CD4-positive, alpha-beta T cell (primary cell): ENCODE measurements at regions of chr21 and their contacts with region 1.

Region 1: DNA sequence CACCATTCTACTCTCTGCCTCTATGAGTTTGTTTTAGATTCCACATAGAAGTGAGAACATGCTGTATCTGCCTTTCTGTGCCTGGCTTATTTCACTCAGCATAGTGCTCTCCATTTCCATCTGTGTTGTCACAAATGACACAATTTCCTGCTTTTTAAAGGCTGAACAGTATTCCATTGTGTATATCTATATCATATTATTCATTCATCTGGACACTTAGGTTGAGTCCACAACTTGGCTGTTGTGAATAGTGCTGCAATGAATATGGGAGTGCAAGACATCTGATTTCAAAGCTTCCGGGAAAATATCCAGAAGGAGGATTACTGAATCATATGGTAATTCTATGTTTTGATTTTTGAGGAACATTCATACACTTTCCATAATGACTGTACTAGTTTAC is 20.1 kb upstream of the DONSON start:
- DNase-seq: no peak
- ATAC-seq: no peak
- H3K4me3 ChIP-seq: no peak overlapping the region
- H3K4me3 Mint-ChIP-seq: no peak overlapping the region
- H3K27ac ChIP-seq: no peak overlapping the region
- H3K27ac Mint-ChIP-seq: no peak overlapping the region
- H3K4me1 ChIP-seq: no peaks in the 10 kb centered on the region
- H3K4me1 Mint-ChIP-seq: peaks cover 5% of the 10 kb centered on the region
- H3K27me3 ChIP-seq: no peaks in the 10 kb centered on the region
- H3K27me3 Mint-ChIP-seq: no peaks in the 10 kb centered on the region
- CTCF ChIP-seq: no peak

Region 2: GRCh38 chr21:33479679-33480480 is 128.7 kb before region 1 on chr21 and contains the start of gene TMEM50B:
- CTCF ChIA-PET with region 1: interaction called, 5 read pairs
- POLR2A ChIA-PET with region 1: interaction called, 15 read pairs
- intact Hi-C with region 1: no loop called
- DNase-seq: peak; percentile 91 to 99 (median 96)
- ATAC-seq: peak; percentile 89
- H3K4me3 ChIP-seq: peak within 1 kb of the TSS; percentile 88
- H3K4me3 Mint-ChIP-seq: peak within 1 kb of the TSS; percentile 89
- H3K27ac ChIP-seq: peak within 1 kb of the TSS; percentile 80 to 90
- H3K27ac Mint-ChIP-seq: peak within 1 kb of the TSS; percentile 96
- H3K4me1 ChIP-seq: peaks cover 22% of the 10 kb centered on the region
- H3K4me1 Mint-ChIP-seq: peaks cover 19% of the 10 kb centered on the region
- H3K27me3 ChIP-seq: no peaks in the 10 kb centered on the region
- H3K27me3 Mint-ChIP-seq: no peaks in the 10 kb centered on the region
- CTCF ChIP-seq: peak; percentile 0
- total RNA-seq, gene TMEM50B: 38.4 to 40.3 TPM

Region 3: DNA sequence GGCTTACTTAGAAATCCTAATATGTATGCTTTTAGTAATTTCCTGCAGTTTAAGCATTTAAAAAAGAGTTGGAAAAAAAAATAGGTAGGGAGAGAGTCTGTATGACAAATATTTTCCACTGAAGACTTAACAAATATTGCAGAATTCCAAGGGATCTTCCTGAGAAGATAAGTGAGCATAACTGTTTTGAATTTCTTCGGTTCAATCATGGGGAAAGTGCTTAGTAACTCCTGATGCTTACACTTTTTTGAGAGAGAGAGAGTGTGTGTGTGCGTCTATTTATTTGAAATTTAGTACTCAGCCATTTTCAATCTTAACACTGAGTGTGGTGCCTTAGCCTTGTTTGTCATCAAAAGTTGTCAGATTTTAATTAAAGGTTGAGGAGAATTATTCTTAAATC is 47.2 kb before region 1 on chr21:
- CTCF ChIA-PET with region 1: interaction called, 4 read pairs
- POLR2A ChIA-PET with region 1: interaction called, 4 read pairs
- intact Hi-C with region 1: loop called in 1 of 2 experiments (anchors 5 kb)
- DNase-seq: no peak
- ATAC-seq: no peak
- H3K4me3 ChIP-seq: no peak overlapping the region
- H3K4me3 Mint-ChIP-seq: no peak overlapping the region
- H3K27ac ChIP-seq: no peak overlapping the region
- H3K27ac Mint-ChIP-seq: peak overlapping the region; percentile 2
- H3K4me1 ChIP-seq: peaks cover 3% of the 10 kb centered on the region
- H3K4me1 Mint-ChIP-seq: peaks cover 67% of the 10 kb centered on the region
- H3K27me3 ChIP-seq: no peaks in the 10 kb centered on the region
- H3K27me3 Mint-ChIP-seq: no peaks in the 10 kb centered on the region
- CTCF ChIP-seq: no peak

Region 4: DNA sequence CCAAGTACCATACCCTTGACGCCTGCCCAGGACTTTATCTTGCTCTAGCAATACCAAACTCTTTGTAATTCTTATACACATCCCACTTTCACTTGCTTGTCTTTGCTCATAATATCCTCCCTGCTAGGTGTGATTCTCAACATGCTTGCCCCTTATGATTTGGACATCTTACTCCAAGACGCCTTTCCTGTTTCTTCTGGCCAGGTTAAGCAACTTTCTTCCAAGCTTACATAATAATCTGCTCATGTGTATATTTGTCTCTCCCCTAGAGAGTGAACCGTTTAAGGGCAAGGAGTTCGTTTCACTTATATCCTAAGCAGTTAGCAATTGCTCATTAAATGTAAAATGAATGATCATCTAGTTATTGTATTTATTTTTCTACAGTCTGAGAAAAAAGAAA is 11.2 kb after region 1 on chr21:
- CTCF ChIA-PET with region 1: interaction called, 12 read pairs
- POLR2A ChIA-PET with region 1: no interaction called
- intact Hi-C with region 1: no loop called
- DNase-seq: no peak
- ATAC-seq: no peak
- H3K4me3 ChIP-seq: no peak overlapping the region
- H3K4me3 Mint-ChIP-seq: no peak overlapping the region
- H3K27ac ChIP-seq: no peak overlapping the region
- H3K27ac Mint-ChIP-seq: no peak overlapping the region
- H3K4me1 ChIP-seq: no peaks in the 10 kb centered on the region
- H3K4me1 Mint-ChIP-seq: no peaks in the 10 kb centered on the region
- H3K27me3 ChIP-seq: no peaks in the 10 kb centered on the region
- H3K27me3 Mint-ChIP-seq: no peaks in the 10 kb centered on the region
- CTCF ChIP-seq: no peak